ENCODE measurements at regions of chr3 and their contacts with region 1.

Region 1: GRCh38 chr3:56443372-56443771 is 24.9 kb downstream of the ERC2 start:
- DNase-seq: no peak
- H3K4me3 ChIP-seq: no peak overlapping the region
- H3K27ac ChIP-seq: no peak overlapping the region
- H3K4me1 ChIP-seq: peaks cover 3% of the 10 kb centered on the region
- H3K27me3 ChIP-seq: no peaks in the 10 kb centered on the region
- CTCF ChIP-seq: no peak
- EP300 ChIP-seq: no peak
- POLR2A ChIP-seq: no peak

Region 2: DNA sequence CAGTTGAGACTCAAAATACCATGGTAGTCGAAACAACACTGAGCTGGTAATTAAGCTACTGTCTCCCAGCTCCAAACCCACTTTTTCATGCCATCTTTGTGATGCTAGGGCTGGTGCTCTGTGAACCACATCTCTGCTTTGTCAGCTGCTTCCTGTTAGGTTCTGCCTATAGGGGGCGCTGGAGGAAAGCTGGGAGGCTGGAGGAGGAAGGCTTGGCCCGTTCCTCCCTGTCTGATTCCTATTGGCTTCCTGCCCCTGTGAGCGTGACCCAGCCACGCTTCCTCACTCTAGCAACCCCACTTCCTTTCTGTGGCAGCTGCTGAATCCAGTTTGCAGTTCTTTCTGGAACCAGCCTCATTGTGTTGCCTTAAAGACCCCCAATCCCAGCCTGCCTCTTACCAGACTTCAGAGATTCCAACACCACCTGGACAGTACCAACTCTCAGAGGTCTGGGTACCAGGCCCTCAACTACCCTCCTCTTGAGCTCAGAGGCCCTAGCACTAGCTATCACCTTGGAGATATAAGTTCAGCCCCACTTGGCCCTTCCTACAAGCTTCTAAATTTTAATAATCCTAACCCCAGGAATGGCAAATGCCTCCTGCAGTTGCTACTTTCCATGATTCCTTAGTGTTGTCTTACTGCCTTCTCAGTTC is 96.0 kb before region 1 on chr3:
- intact Hi-C with region 1: loop called in 1 of 4 experiments (anchors 10 kb)
- DNase-seq: no peak
- H3K4me3 ChIP-seq: no peak overlapping the region
- H3K27ac ChIP-seq: no peak overlapping the region
- H3K4me1 ChIP-seq: no peaks in the 10 kb centered on the region
- H3K27me3 ChIP-seq: no peaks in the 10 kb centered on the region
- CTCF ChIP-seq: no peak
- EP300 ChIP-seq: no peak
- POLR2A ChIP-seq: no peak